ENCODE measurements at regions of chr3 and their contacts with region 1.

Region 1: GRCh38 chr3:126487151-126487771 is 11.6 kb upstream of the ZXDC start:
- DNase-seq: no peak
- H3K4me3 ChIP-seq: no peak overlapping the region
- H3K27ac ChIP-seq: no peak overlapping the region
- H3K4me1 ChIP-seq: peaks cover 0 to 22% (median 12%) of the 10 kb centered on the region in 4 experiments; a peak in 6 of 7 replicates
- H3K27me3 ChIP-seq: 0 out of 7 replicates have a peak, but pooled peaks cover 0 to 2% (median 0%) of the 10 kb centered on the region in 4 experiments
- CTCF ChIP-seq: peak in 2 of 3 experiments; percentile 53 to 59; a peak in 3 of 4 replicates
- EP300 ChIP-seq: no peak
- POLR2A ChIP-seq: no peak
- RAD21 ChIP-seq: peak in 1 of 2 experiments; percentile 49; a peak in 3 of 4 replicates

Region 2: DNA sequence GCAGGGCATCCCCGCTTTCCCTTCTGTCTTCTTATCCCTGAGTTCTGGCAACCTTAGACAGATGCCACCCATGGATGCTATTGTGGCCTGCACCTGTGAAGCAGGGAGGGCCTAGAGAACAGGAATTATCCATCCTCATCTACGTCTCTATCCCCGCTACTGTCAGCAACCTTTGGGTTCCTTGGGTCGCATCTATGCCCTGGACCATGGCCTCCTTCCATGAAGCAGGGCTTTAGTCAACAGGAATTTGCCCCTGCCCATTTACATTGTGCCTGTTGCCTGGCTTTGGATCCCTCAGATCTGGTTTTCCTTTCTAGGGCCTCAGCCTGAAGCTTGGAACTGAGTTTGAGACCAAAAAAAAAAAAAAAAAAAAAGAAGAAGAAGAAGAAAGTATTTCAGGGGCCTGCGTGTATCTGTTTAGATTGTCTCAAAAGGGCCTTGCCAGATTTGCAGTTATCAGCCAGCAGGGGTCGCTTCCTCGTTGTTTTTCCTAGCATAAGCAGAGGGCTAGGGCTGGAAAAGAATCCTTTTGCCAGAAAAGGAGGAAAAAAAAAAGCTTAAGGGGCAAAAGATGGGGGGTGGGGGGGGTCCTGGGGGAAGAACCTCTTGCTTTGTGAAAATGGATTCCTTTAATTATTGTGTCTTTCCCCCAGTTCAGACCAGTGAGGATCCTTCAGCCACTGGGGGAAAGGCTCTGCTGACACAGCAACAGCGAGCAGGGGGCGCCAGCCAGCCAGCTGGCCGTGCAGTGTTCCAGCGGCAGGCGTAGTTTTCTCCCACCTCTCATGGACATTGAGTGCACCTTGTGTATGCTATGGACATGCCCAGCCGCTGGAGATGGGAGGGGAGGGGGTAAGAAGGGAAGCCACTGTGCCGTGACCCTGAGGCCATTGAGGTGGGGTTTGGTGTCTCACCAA is 241.2 kb before region 1 on chr3:
- CTCF ChIA-PET with region 1: no interaction called
- POLR2A ChIA-PET with region 1: no interaction called
- DNase-seq: peak in 1 of 2 experiments; percentile 70
- H3K4me3 ChIP-seq: no peak overlapping the region
- H3K27ac ChIP-seq: no peak overlapping the region
- H3K4me1 ChIP-seq: peaks cover 0 to 2% (median 0%) of the 10 kb centered on the region in 4 experiments; a peak in 2 of 7 replicates
- H3K27me3 ChIP-seq: no peaks in the 10 kb centered on the region
- CTCF ChIP-seq: peak; percentile 58 to 81 (median 76)
- EP300 ChIP-seq: no peak
- POLR2A ChIP-seq: no peak
- RAD21 ChIP-seq: peak; percentile 48 to 52; a peak in 3 of 4 replicates

Region 3: GRCh38 chr3:126475413-126476114 is 11.7 kb before region 1 on chr3 and contains the start of gene ZXDC:
- CTCF ChIA-PET with region 1: interaction called, 7 read pairs
- POLR2A ChIA-PET with region 1: interaction called, 23 read pairs
- DNase-seq: peak; percentile 81 to 94
- H3K4me3 ChIP-seq: peak within 1 kb of the TSS; percentile 73 to 80 (median 74)
- H3K27ac ChIP-seq: peak within 1 kb of the TSS; percentile 80
- H3K4me1 ChIP-seq: peaks cover 9 to 22% (median 14%) of the 10 kb centered on the region in 4 experiments; a peak in 6 of 7 replicates
- H3K27me3 ChIP-seq: no peaks in the 10 kb centered on the region
- CTCF ChIP-seq: peak in 2 of 3 experiments; percentile 49; a peak in 3 of 4 replicates
- EP300 ChIP-seq: no peak
- POLR2A ChIP-seq: peak in 1 of 2 experiments; percentile 78; a peak in 1 of 3 replicates
- RAD21 ChIP-seq: peak; percentile 13 to 48; a peak in 3 of 4 replicates
- total RNA-seq, gene ZXDC: 23.0 and 24.3 TPM in 2 replicates

Region 4: GRCh38 chr3:126498929-126499328 is 11.7 kb after region 1 on chr3:
- CTCF ChIA-PET with region 1: interaction called, 49 read pairs
- POLR2A ChIA-PET with region 1: interaction called, 4 read pairs
- DNase-seq: no peak
- H3K4me3 ChIP-seq: no peak overlapping the region
- H3K27ac ChIP-seq: no peak overlapping the region
- H3K4me1 ChIP-seq: peaks cover 0 to 22% (median 16%) of the 10 kb centered on the region in 4 experiments; a peak in 6 of 7 replicates
- H3K27me3 ChIP-seq: no peaks in the 10 kb centered on the region; a peak in 1 of 7 replicates
- CTCF ChIP-seq: peak in 2 of 3 experiments; percentile 21 to 29; a peak in 2 of 4 replicates
- EP300 ChIP-seq: no peak
- POLR2A ChIP-seq: no peak
- RAD21 ChIP-seq: peak; percentile 31 to 42; a peak in 3 of 4 replicates

Region 5: DNA sequence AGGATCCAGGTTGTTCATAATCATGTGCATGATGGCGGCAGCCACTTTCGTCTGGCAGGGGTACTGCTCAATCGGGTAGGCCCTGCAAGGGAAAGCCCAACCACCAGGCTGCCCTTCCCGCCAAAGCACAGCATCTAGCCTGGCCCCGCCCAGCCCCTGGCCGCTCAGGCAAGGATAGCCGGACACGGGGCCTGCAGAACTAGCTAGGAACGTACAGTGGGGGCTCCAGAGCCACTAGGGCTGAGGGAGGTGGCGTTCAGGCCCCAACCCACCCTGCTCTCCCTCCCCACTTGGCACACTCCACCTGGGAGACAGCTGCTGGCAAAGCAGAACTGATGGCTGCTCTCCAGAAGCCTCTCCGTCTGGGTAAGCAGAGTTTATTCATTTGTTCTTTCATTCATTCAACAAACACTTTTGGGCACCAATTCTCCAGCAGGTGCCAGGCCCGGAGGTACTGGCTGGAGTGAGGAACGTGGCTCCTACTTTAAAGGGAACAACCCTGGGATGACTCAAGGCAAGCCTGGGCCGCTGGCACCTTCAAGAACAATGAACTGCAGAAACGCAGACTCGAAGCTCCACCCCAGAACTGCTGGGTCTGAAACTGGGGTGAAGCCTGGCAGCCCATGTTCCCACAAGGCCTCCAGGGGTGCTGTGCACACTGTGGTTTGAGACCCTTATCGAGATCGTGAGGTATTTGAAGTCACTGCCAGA is 22.5 kb after region 1 on chr3:
- CTCF ChIA-PET with region 1: interaction called, 12 read pairs
- POLR2A ChIA-PET with region 1: interaction called, 3 read pairs
- DNase-seq: no peak
- H3K4me3 ChIP-seq: no peak overlapping the region
- H3K27ac ChIP-seq: no peak overlapping the region
- H3K4me1 ChIP-seq: no peaks in the 10 kb centered on the region
- H3K27me3 ChIP-seq: no peaks in the 10 kb centered on the region
- CTCF ChIP-seq: no peak
- EP300 ChIP-seq: no peak
- POLR2A ChIP-seq: no peak
- RAD21 ChIP-seq: no peak

Region 6: DNA sequence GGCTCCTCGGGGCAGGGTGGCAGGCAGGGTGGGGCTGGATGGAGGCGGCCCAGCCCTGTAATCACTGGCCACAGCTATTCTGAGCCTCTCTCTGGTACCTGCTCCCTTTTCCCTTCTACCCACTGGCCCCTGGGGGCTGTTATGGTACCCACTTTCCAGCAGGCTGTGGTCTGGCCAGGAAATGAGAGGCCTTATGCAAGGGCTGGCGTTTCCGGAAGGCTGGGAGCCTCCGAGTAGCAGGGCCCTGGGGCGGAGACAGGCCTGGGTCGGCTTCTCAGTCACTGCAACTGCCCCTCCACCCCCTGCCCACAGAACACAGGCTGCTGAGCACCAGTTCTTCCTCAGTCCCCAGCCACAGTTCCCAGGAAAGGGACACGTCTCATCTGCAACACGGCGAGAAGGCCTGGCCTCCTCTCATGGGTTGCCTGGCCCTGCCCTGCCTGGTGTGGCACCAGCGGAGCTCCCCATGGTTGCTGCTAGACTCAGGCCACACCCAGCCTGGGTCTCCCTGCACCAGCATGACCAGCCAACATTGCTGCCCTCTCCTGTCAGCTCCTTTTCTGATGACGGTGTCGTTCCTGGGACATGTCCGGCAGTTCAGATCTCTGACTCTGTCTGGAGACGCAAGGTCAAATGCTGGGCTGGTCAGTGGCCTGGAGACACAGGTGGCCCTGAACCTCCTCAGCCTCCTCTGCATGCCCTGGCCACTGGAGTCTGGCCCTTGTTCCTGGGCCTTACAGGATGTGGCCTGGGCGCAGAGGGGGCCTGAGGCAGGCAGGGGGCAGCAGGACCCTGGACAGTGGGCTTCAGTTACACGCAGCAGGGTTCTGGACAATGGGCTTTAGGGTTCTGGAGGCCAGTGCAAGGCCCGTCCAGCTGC is 43.1 kb after region 1 on chr3:
- CTCF ChIA-PET with region 1: no interaction called
- POLR2A ChIA-PET with region 1: no interaction called
- DNase-seq: no peak
- H3K4me3 ChIP-seq: no peak overlapping the region
- H3K27ac ChIP-seq: no peak overlapping the region
- H3K4me1 ChIP-seq: peaks cover 0 to 6% (median 2%) of the 10 kb centered on the region in 4 experiments; a peak in 2 of 7 replicates
- H3K27me3 ChIP-seq: no peaks in the 10 kb centered on the region; a peak in 1 of 7 replicates
- CTCF ChIP-seq: peak in 2 of 3 experiments; percentile 37 to 44; a peak in 3 of 4 replicates
- EP300 ChIP-seq: no peak
- POLR2A ChIP-seq: no peak
- RAD21 ChIP-seq: peak; percentile 44 to 56